GM13976 (cell line): ENCODE measurements at regions of chr5 and their contacts with region 1.

Region 1: GRCh38 chr5:81194633-81195333 is 38.3 kb upstream of the CKMT2 start:
- DNase-seq: peak; percentile 92
- CTCF ChIP-seq: peak; percentile 91

Region 2: DNA sequence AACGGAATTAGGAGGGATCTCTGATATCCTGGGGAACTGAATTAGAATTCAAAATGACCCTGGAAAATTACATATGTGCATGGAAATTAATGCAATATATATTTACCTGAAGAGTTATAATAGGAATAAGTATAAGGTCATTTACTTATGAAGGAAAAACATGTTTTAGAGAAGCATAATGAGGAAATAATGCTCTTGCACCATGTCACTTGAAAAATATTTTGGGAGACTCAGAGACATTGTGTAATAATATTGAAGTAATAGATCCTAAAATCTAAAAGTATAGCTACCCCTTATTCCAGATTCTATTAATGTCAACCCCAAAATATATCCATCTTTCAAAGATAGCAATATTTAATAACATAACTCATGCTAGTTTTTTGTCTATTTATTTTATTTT is 846.6 kb before region 1 on chr5:
- in situ Hi-C with region 1: no loop called
- DNase-seq: no peak
- CTCF ChIP-seq: no peak

Region 3: GRCh38 chr5:80686757-80687156 is 508.0 kb before region 1 on chr5:
- in situ Hi-C with region 1: loop called (anchors 10 kb)
- DNase-seq: no peak
- CTCF ChIP-seq: no peak

Region 4: DNA sequence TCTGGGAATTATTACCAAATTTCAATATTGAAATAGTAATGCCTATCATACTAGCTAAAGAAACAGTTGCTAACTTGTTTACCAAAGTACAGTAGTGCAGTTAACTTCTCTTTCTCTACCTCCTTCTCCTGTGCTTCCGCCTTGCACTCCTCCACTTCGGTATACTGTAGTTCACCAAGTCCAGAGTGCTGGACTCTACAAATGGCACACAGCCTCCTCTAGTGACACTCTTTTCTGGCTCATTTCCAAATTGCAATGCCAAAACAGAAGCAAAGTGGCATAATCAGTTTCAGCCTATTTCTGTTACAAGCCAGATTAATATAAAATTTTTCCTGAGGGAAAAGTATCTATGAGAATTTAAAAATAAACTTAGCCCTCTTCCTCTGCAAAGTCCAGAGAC is 320.6 kb before region 1 on chr5:
- in situ Hi-C with region 1: no loop called
- DNase-seq: no peak
- CTCF ChIP-seq: no peak